HepG2 (cell line): ENCODE measurements at regions of chr12 and their contacts with region 1.

Region 1: DNA sequence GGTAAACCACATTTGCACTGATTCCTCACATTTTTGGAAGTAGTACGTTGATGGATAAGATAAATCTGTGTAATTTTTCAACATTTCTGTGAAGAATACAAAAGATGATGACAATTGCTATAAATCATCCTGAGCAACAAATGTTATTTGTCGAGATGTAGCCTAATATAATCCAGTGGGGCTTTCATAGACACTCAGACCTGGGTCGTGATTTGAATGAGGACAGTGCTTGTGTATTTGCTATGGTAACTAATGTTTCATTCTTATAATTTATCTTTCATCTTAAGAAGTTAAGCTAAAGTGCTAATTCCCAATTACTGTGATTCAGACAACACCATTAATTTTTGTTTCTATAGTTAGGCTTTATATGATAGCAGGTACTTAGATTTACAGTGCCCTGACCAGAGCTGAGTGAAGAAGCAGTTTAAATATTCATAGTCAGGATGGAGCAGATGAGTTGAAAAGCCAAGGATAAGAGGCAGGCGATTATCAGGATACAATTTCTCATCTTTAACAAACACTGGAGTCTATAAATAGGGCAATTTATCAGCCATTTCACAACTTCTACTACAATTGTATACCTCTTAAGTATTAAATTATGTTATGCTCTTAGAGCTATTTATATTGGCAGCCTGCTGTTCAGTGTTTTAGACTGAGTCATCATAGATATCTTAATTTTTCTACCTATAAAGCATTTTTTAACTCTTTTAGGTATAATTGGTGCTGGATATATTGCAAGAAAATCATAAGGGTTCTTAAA is 359.9 kb downstream of the TRHDE start:
- DNase-seq: no peak
- ATAC-seq: no peak
- H3K4me3 ChIP-seq: no peak overlapping the region
- H3K27ac ChIP-seq: no peak overlapping the region
- H3K4me1 ChIP-seq: no peaks in the 10 kb centered on the region
- H3K27me3 ChIP-seq: no peaks in the 10 kb centered on the region
- CTCF ChIP-seq: no peak
- EP300 ChIP-seq: no peak
- POLR2A ChIP-seq: no peak
- RAD21 ChIP-seq: no peak

Region 2: DNA sequence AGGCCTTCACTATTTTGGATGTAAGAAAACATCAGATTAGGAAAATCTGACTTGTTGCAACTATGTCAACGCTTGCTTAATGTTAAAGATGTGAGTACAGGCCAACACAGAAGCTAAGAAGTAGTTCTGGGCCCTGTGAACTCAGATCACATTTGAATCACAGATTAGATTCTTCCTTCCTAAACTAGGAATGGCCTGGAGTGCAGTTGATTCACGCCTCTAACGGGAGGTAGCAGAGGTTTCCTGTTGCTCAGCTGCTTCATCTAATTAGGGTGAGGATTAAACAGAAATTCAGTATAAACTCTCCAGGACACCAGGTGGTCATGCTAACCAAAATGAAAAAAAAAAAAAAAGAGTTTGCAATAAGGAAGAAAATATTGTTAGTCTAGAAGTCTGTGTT is 45.6 kb before region 1 on chr12:
- CTCF ChIA-PET with region 1: no interaction called
- POLR2A ChIA-PET with region 1: no interaction called
- in situ Hi-C with region 1: no loop called
- intact Hi-C with region 1: loop called (anchors 1 kb)
- DNase-seq: no peak
- ATAC-seq: no peak
- H3K4me3 ChIP-seq: no peak overlapping the region
- H3K27ac ChIP-seq: no peak overlapping the region
- H3K4me1 ChIP-seq: no peaks in the 10 kb centered on the region
- H3K27me3 ChIP-seq: no peaks in the 10 kb centered on the region
- CTCF ChIP-seq: no peak
- EP300 ChIP-seq: no peak
- POLR2A ChIP-seq: no peak
- RAD21 ChIP-seq: no peak